ENCODE measurements at regions of chr1 and their contacts with region 1.

Region 1: DNA sequence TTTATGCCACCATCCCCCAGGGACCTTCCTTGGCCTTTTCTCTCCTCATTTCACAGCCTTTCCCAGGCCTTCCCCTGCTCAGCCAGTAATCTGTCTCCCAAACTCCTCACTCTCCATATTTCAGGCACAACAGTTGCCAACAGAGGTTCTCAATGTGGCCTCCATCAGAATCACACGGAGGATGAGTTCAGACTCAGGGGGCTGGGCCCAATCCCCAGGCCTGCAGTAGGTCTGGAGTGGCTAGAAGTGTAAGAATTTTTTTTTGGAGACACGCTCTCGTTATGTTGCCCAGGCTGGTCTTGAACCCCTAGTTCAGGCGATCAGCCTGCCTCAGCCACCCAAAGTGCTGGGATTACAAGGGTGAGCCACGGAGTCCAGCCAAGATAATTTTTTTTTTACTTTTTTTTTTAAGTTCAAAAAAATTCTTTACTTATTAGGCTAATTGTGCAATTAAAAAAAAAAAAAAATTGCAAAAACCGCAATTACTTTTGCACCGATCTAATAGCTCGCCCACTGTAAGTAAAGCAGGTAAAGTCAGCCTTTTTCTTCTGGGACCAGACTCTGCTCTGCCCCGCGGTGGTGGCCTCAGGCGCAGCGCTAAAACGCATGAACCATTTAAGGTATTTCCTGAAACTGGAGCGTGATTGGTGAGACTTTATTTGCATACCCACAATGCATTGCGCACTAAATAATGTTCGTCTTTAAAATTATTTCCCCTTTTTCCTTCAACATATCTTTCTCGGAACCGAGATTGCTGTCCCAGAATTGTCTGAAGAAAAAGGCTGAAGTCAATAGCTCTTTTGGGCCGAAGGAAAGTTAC is 18.7 kb downstream of the KIAA2013 start:
- DNase-seq: peak; percentile 74
- ATAC-seq: peak; percentile 47
- H3K4me3 Mint-ChIP-seq: peak overlapping the region; percentile 94
- H3K27ac Mint-ChIP-seq: peak overlapping the region; percentile 100
- H3K4me1 Mint-ChIP-seq: peaks cover 21% of the 10 kb centered on the region
- H3K27me3 Mint-ChIP-seq: no peaks in the 10 kb centered on the region
- CTCF ChIP-seq: no peak

Region 2: GRCh38 chr1:11654137-11654938 is 253.1 kb before region 1 on chr1 and contains the starts of genes FBXO2 and FBXO44:
- CTCF ChIA-PET with region 1: no interaction called
- POLR2A ChIA-PET with region 1: interaction called, 15 read pairs
- intact Hi-C with region 1: loop called (anchors 5 kb)
- DNase-seq: peak; percentile 60
- ATAC-seq: peak; percentile 85
- H3K4me3 Mint-ChIP-seq: peak within 1 kb of the TSS; percentile 80
- H3K27ac Mint-ChIP-seq: no peak within 1 kb of the TSS
- H3K4me1 Mint-ChIP-seq: peaks cover 29% of the 10 kb centered on the region
- H3K27me3 Mint-ChIP-seq: no peaks in the 10 kb centered on the region
- CTCF ChIP-seq: no peak
- total RNA-seq, gene FBXO2: 4.2 and 4.6 TPM in 2 replicates
- total RNA-seq, gene FBXO44: 27.2 and 29.9 TPM in 2 replicates

Region 3: DNA sequence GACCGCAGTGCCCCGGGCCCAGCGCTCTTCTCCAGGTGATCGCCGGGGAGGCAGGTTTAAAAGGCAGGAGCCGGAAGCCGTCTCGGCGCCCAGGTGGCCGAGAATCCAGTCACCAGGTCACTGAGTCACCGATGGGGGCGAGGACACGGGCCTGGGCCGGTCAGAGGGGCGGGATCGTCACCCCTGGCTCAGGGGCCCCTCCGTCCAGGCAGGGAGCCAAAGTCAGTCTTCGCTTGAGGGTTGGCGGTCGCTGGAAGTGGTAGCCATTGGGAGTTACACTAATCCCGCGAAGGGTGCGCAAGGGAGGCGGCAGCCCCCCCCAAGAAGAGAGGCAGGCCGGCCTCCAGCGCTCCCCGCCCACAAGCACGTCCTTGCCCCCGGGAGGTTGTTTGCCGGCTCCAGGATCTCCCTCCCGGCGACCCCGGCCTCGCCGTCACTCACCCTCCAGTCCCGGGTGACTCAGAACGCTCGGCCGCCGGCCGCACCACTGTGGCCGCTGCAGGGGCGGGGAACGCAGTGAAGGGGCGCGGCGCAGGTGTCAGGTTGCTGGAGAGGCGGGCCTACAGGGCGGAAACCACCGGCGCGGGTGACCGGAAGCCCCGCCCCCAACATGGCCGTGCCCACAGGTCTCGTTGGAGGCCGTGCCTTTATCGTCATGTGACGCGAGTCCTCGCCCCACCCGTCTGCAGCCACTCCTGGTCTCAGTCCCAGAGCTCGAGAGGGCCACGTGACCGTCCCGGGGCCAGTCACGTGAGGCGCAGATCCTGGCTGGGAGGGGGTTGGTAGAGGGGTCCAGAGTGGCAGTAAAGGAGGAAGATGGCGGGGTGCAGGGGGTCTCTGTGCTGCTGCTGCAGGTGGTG is 101.8 kb before region 1 on chr1 and contains the starts of genes CLCN6 and MTHFR:
- CTCF ChIA-PET with region 1: no interaction called
- POLR2A ChIA-PET with region 1: interaction called, 163 read pairs
- intact Hi-C with region 1: loop called (anchors 1 kb)
- DNase-seq: peak; percentile 99
- ATAC-seq: peak; percentile 84
- H3K4me3 Mint-ChIP-seq: peak within 1 kb of the TSS; percentile 95
- H3K27ac Mint-ChIP-seq: peak within 1 kb of the TSS; percentile 97
- H3K4me1 Mint-ChIP-seq: peaks cover 78% of the 10 kb centered on the region
- H3K27me3 Mint-ChIP-seq: no peaks in the 10 kb centered on the region
- CTCF ChIP-seq: no peak
- total RNA-seq, gene CLCN6: 66.0 and 79.6 TPM in 2 replicates
- total RNA-seq, gene MTHFR: 54.1 and 56.9 TPM in 2 replicates

Region 4: DNA sequence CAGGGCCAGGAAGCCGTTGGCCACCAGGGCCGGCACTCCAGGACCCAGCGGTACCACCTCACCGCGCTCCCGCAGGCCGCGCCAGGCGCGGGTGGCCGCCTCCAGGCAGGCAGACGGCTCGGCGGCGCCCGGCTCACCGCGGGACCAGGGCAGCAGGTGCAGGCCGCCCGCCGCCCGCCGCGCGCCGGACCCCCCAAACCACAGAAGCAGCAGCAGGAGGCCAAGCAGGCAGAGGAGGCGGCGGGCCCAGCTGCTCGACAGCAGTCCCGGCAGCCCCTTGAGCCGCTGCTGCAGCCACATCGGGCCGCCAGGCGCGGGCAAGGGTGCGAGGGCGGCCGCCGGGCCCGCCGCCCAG is 18.4 kb after region 1 on chr1:
- CTCF ChIA-PET with region 1: interaction called, 3 read pairs
- POLR2A ChIA-PET with region 1: interaction called, 184 read pairs
- intact Hi-C with region 1: loop called (anchors 1 kb)
- DNase-seq: no peak
- ATAC-seq: peak; percentile 3
- H3K4me3 Mint-ChIP-seq: no peak overlapping the region
- H3K27ac Mint-ChIP-seq: no peak overlapping the region
- H3K4me1 Mint-ChIP-seq: peaks cover 42% of the 10 kb centered on the region
- H3K27me3 Mint-ChIP-seq: no peaks in the 10 kb centered on the region
- CTCF ChIP-seq: no peak

Region 5: GRCh38 chr1:12031039-12031980 is 123.8 kb after region 1 on chr1:
- CTCF ChIA-PET with region 1: no interaction called
- POLR2A ChIA-PET with region 1: interaction called, 65 read pairs
- intact Hi-C with region 1: loop called (anchors 1 kb)
- DNase-seq: no peak
- ATAC-seq: peak; percentile 73
- H3K4me3 Mint-ChIP-seq: no peak overlapping the region
- H3K27ac Mint-ChIP-seq: no peak overlapping the region
- H3K4me1 Mint-ChIP-seq: peaks cover 15% of the 10 kb centered on the region
- H3K27me3 Mint-ChIP-seq: no peaks in the 10 kb centered on the region
- CTCF ChIP-seq: no peak

Region 6: DNA sequence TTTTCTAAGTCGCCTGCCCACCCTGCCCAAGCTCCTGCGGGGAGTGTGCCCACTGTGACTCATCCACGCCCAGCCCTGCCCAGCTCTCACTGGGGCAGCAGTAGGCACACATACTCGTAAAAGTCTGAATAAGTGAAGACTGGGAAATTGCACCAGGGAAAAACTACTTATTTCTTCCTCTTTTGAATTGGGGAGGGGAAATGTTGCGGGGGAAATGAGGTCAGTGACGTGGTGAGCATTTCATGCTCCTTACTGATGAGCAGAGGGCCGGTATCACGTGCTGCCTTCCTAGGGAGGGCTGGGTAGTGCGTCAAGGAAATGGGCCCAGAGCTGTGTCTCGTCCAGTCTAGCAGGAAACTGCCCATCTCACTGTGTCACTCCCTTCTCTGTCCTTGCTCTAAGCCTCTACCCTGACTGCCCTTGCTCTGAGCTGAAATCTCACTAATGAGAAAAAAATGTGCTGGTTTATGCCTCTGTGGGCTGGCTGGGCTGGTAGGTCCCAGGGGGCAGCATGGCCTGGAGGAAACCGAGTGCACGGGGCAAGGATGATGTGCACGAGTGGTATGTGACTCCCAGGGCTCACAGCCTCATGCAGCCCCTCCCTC is 245.8 kb after region 1 on chr1:
- CTCF ChIA-PET with region 1: no interaction called
- POLR2A ChIA-PET with region 1: interaction called, 33 read pairs
- intact Hi-C with region 1: no loop called
- DNase-seq: peak; percentile 47
- ATAC-seq: peak; percentile 40
- H3K4me3 Mint-ChIP-seq: peak overlapping the region; percentile 52
- H3K27ac Mint-ChIP-seq: peak overlapping the region; percentile 92
- H3K4me1 Mint-ChIP-seq: peaks cover 91% of the 10 kb centered on the region
- H3K27me3 Mint-ChIP-seq: no peaks in the 10 kb centered on the region
- CTCF ChIP-seq: no peak

Region 7: GRCh38 chr1:13478692-13479091 is 1571.2 kb after region 1 on chr1:
- CTCF ChIA-PET with region 1: no interaction called
- POLR2A ChIA-PET with region 1: no interaction called
- intact Hi-C with region 1: no loop called
- DNase-seq: no peak
- ATAC-seq: no peak
- H3K4me3 Mint-ChIP-seq: no peak overlapping the region
- H3K27ac Mint-ChIP-seq: no peak overlapping the region
- H3K4me1 Mint-ChIP-seq: no peaks in the 10 kb centered on the region
- H3K27me3 Mint-ChIP-seq: peaks cover 4% of the 10 kb centered on the region
- CTCF ChIP-seq: no peak

Measured in activated B cell treated with CpG ODN at 0.5 μM for 24 hours (primary cell).